ENCODE measurements at regions of chr2 and their contacts with region 1.

Region 1: GRCh38 chr2:64036034-64036705 is 16.9 kb upstream of the VPS54 start:
- DNase-seq: peak; percentile 50 to 69 (median 64)
- H3K4me3 ChIP-seq: no peak overlapping the region
- H3K4me3 Mint-ChIP-seq: peak overlapping the region; percentile 16 to 81 (median 67)
- H3K27ac ChIP-seq: no peak overlapping the region
- H3K27ac Mint-ChIP-seq: peak overlapping the region; percentile 48 to 88 (median 72)
- H3K4me1 ChIP-seq: peaks cover 38% of the 10 kb centered on the region
- H3K4me1 Mint-ChIP-seq: peaks cover 31 to 59% (median 39%) of the 10 kb centered on the region in 4 donors
- H3K27me3 ChIP-seq: no peaks in the 10 kb centered on the region
- H3K27me3 Mint-ChIP-seq: no peaks in the 10 kb centered on the region

Region 2: DNA sequence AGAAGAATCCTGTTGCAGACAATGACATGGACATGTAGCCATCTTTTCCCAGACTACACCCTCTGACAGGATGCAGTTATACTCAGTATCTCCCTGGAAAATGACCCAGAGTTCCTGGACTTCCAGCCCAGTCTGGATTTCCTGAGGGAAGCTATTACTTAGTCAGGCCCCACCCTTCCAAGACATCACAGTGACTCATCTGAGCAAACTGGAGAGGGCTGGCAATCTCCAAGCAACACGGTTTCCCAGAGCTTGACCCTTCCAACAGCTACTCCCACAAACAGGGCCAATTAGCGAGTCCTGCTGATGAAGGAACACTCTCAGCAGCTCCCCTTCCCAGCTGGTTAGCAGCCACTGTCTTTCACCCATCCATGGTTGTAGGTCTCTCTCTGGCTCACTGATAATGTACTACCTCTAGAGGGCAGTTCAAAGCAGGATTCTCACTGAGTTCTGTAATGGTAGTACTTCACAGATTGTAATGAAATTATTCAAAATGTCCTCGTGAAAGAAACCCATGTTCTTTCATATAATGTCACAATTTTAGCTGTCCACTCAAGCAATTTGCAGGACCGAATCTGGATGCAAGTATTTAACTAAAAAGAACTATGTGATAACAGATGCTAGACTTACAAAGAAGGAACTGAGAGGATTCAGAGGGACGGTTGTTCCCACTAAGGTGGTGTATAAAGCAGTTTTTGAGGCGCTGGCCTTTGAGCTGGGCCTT is 337.2 kb before region 1 on chr2:
- CTCF ChIA-PET with region 1: no interaction called
- POLR2A ChIA-PET with region 1: no interaction called
- intact Hi-C with region 1: no loop called
- DNase-seq: peak in 4 of 5 donors; percentile 15 to 45 (median 30)
- H3K4me3 ChIP-seq: no peak overlapping the region
- H3K4me3 Mint-ChIP-seq: no peak overlapping the region
- H3K27ac ChIP-seq: no peak overlapping the region
- H3K27ac Mint-ChIP-seq: no peak overlapping the region
- H3K4me1 ChIP-seq: no peaks in the 10 kb centered on the region
- H3K4me1 Mint-ChIP-seq: no peaks in the 10 kb centered on the region
- H3K27me3 ChIP-seq: no peaks in the 10 kb centered on the region
- H3K27me3 Mint-ChIP-seq: no peaks in the 10 kb centered on the region

Region 3: DNA sequence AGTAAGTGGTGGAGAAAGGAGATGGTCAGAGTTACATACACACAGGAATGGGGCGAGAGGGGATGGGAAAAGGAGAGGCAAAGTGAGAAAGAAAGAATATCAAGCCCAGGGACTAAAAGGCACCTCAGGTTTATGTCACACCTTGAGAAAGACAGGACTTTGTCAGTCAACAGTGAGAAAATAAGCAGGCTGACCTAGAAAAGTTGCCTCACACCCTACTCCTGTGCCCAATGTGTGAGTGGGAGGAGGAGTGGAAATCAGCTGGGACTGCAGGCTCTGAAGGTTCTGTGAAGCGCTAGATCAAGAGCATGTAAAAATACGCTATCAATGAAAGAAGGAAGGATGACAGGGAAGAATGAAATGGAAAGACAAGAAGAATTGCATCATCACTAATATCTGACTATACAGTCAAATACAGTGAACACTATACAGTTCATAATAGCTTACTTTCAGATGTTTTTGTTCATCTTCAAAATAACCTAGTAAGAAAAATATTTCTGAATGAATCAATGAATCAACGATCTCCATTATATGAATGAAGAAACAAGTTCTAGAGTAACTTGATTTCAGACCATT is 27.6 kb before region 1 on chr2:
- CTCF ChIA-PET with region 1: no interaction called
- POLR2A ChIA-PET with region 1: no interaction called
- intact Hi-C with region 1: no loop called
- DNase-seq: no peak
- H3K4me3 ChIP-seq: no peak overlapping the region
- H3K4me3 Mint-ChIP-seq: no peak overlapping the region
- H3K27ac ChIP-seq: no peak overlapping the region
- H3K27ac Mint-ChIP-seq: no peak overlapping the region
- H3K4me1 ChIP-seq: no peaks in the 10 kb centered on the region
- H3K4me1 Mint-ChIP-seq: peaks cover 23 to 33% (median 28%) of the 10 kb centered on the region in 4 donors
- H3K27me3 ChIP-seq: no peaks in the 10 kb centered on the region
- H3K27me3 Mint-ChIP-seq: no peaks in the 10 kb centered on the region

Region 4: DNA sequence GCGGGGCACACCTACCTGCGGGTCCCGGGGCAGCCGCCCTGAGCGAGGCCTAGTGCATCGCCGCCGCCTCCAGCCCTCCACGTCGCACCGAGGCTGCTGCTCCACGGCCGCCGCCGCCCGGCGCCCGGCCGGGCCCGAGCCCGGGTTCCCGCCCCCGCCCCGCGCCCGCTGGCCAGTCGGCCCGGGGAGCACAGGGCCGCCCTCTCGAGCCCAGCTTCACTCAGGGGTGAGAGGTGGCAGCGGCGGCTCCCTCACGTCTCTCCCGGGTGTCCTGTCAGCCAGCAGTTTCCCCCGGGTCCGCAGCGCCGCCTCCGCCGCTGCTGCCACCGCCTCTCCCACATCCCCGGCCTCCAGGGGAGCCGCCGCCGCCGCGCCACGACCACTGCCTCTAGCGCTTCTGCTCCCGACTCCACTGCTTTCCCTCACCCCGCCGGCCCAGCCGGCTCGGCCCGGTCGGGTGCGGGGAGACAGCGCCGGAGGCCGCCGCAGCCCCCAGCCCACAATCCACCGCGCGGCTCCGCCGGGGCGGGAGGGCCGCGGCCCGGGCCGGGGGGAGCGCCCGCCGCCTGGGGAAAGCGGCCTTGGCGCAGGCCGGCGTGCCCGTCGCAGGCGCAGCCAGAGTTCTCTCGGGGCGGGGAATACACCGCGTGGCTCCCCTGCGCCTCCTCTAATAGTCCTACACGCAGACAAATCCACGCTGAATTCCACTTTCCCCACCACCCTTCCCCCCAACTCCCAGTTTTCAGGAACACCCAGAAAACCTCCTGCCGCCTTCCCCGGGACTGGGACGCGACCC is 17.0 kb before region 1 on chr2 and contains the start of gene VPS54:
- CTCF ChIA-PET with region 1: interaction called, 4 read pairs
- POLR2A ChIA-PET with region 1: interaction called, 24 read pairs
- intact Hi-C with region 1: loop called (anchors 1 kb)
- DNase-seq: peak; percentile 59 to 74 (median 63)
- H3K4me3 ChIP-seq: peak within 1 kb of the TSS; percentile 51 to 58
- H3K4me3 Mint-ChIP-seq: peak within 1 kb of the TSS; percentile 98 to 99 (median 99)
- H3K27ac ChIP-seq: peak within 1 kb of the TSS; percentile 72
- H3K27ac Mint-ChIP-seq: peak within 1 kb of the TSS; percentile 94 to 99 (median 98)
- H3K4me1 ChIP-seq: peaks cover 55% of the 10 kb centered on the region
- H3K4me1 Mint-ChIP-seq: peaks cover 34 to 51% (median 42%) of the 10 kb centered on the region in 4 donors
- H3K27me3 ChIP-seq: no peaks in the 10 kb centered on the region
- H3K27me3 Mint-ChIP-seq: no peaks in the 10 kb centered on the region
- total RNA-seq, gene VPS54: 15.2 to 16.4 TPM

Measured in CD4-positive, alpha-beta memory T cell (primary cell).